Natural killer cell (primary cell): ENCODE measurements at regions of chr2 and their contacts with region 1.

Region 1: DNA sequence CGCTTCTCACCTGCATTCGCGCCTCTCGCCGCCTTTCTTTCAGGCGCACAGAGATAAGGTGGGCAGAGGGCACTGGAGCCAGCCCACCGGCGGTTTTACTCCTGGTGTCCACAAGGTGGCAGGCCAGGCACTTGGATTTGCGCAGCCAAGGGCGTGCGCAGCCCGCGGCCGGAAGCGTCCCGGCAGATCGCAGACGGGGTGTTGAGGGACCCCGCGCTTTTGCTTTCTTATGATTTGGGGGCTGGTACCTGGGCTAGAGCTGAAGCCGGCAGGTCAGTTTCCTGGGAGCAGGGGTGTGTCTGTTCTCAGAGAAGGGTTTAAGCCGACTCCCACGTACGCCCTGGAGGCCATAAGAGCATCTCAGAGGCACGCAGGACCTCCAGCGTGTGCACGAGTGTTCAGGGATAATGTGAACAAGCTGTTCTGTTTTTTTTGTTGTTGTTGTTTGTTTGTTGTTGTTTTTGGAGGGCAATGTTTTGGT is 305.6 kb upstream of the CXCR4 start:
- DNase-seq: peak; percentile 68 to 88
- ATAC-seq: peak; percentile 92 to 98 (median 98)
- H3K4me3 ChIP-seq: peak overlapping the region; percentile 29
- H3K4me3 Mint-ChIP-seq: peak overlapping the region; percentile 85
- H3K27ac ChIP-seq: no peak overlapping the region
- H3K27ac Mint-ChIP-seq: peak overlapping the region in 1 of 2 donors; percentile 19
- H3K4me1 ChIP-seq: peaks cover 17% of the 10 kb centered on the region
- H3K4me1 Mint-ChIP-seq: peaks cover 15 to 16% of the 10 kb centered on the region in 2 donors
- H3K27me3 ChIP-seq: no peaks in the 10 kb centered on the region
- H3K27me3 Mint-ChIP-seq: peaks cover 35 to 64% of the 10 kb centered on the region in 2 donors
- CTCF ChIP-seq: peak; percentile 82

Region 2: GRCh38 chr2:136362676-136363390 is 60.7 kb before region 1 on chr2:
- intact Hi-C with region 1: no loop called
- DNase-seq: peak in 1 of 2 donors; percentile 33
- ATAC-seq: peak; percentile 54 to 61 (median 56)
- H3K4me3 ChIP-seq: no peak overlapping the region
- H3K4me3 Mint-ChIP-seq: no peak overlapping the region
- H3K27ac ChIP-seq: no peak overlapping the region
- H3K27ac Mint-ChIP-seq: no peak overlapping the region
- H3K4me1 ChIP-seq: no peaks in the 10 kb centered on the region
- H3K4me1 Mint-ChIP-seq: peaks cover 0 to 11% of the 10 kb centered on the region in 2 donors
- H3K27me3 ChIP-seq: no peaks in the 10 kb centered on the region
- H3K27me3 Mint-ChIP-seq: peaks cover 0 to 4% of the 10 kb centered on the region in 2 donors
- CTCF ChIP-seq: no peak

Region 3: GRCh38 chr2:137838255-137839092 is 1414.9 kb after region 1 on chr2:
- intact Hi-C with region 1: loop called (anchors 2 kb)
- DNase-seq: peak in 1 of 2 donors; percentile 53
- ATAC-seq: peak in 1 of 3 donors; percentile 46
- H3K4me3 ChIP-seq: no peak overlapping the region
- H3K4me3 Mint-ChIP-seq: no peak overlapping the region
- H3K27ac ChIP-seq: no peak overlapping the region
- H3K27ac Mint-ChIP-seq: no peak overlapping the region
- H3K4me1 ChIP-seq: no peaks in the 10 kb centered on the region
- H3K4me1 Mint-ChIP-seq: no peaks in the 10 kb centered on the region
- H3K27me3 ChIP-seq: no peaks in the 10 kb centered on the region
- H3K27me3 Mint-ChIP-seq: no peaks in the 10 kb centered on the region
- CTCF ChIP-seq: peak; percentile 52